ENCODE measurements at regions of chr16 and their contacts with region 1.

Region 1: GRCh38 chr16:7355758-7356157 is 23.1 kb downstream of the RBFOX1 start:
- DNase-seq: no peak
- H3K4me3 ChIP-seq: no peak overlapping the region
- H3K27ac ChIP-seq: no peak overlapping the region
- H3K4me1 ChIP-seq: no peaks in the 10 kb centered on the region
- H3K27me3 ChIP-seq: no peaks in the 10 kb centered on the region
- CTCF ChIP-seq: no peak

Region 2: DNA sequence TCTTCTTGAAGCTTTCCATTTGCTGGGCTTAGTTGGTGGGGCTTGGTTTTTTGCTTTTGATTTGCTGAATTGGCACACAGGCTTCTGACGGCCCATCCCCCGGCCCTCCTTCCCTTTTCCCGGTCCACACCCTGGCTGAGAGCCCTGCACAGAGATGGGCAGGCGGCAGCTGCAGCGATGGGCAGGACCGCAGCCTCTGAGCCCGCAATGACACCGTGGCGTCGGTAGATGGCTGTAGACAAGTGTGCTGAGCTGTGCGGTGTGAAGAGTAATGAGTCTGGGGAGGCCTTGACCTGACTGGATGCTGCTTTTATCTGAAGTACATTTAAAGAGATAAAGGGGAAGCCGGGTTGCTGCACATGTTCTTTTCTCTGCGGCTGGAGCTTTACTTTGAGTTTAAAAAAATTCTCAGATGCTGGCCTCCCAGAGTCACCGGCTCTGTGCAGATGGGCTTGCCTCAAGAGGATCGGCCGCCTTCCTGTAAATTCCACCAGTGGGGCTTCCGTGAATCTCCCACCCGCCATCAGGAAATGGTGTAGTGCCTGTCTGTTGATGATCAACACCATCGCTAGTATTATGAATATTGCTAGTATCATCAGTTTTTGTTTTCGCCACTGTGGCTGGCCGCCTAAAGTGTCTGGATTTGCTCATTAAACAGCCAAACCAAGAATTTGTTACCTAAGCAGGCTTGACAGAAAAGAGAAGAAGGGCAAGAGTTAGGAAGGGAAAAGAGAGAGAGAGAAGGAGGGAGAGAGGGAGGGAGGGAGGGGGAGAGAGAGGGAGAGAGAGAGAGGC is 268.7 kb before region 1 on chr16:
- CTCF ChIA-PET with region 1: no interaction called
- dilution Hi-C with region 1: no loop called
- in situ Hi-C with region 1: no loop called
- intact Hi-C with region 1: no loop called
- DNase-seq: no peak
- H3K4me3 ChIP-seq: no peak overlapping the region
- H3K27ac ChIP-seq: no peak overlapping the region
- H3K4me1 ChIP-seq: no peaks in the 10 kb centered on the region
- H3K27me3 ChIP-seq: no peaks in the 10 kb centered on the region
- CTCF ChIP-seq: no peak

Region 3: GRCh38 chr16:7313170-7313569 is 42.6 kb before region 1 on chr16:
- CTCF ChIA-PET with region 1: no interaction called
- dilution Hi-C with region 1: no loop called
- in situ Hi-C with region 1: no loop called
- intact Hi-C with region 1: no loop called
- DNase-seq: no peak
- H3K4me3 ChIP-seq: no peak overlapping the region
- H3K27ac ChIP-seq: no peak overlapping the region
- H3K4me1 ChIP-seq: no peaks in the 10 kb centered on the region
- H3K27me3 ChIP-seq: no peaks in the 10 kb centered on the region
- CTCF ChIP-seq: no peak

Region 4: DNA sequence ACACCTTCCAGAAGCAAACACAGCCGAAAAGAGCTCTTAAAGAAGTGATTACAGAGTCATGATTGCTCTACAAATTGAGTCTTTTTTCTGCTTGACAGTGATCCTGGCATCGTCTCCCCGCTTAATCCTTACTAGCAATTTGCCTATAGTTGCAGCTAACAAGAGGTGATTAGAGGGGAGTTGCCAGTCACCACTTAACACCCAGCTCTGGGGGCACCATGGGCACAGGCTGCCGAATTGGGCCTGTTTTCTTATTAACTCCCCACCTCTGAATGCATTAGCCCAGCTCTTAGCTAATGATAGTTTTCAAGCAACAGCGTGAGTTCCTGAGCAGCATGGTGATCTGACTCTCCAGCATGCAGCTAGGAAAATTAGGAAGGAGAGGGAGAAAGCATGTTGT is 70.4 kb after region 1 on chr16:
- CTCF ChIA-PET with region 1: no interaction called
- dilution Hi-C with region 1: no loop called
- in situ Hi-C with region 1: no loop called
- intact Hi-C with region 1: no loop called
- DNase-seq: no peak
- H3K4me3 ChIP-seq: no peak overlapping the region
- H3K27ac ChIP-seq: no peak overlapping the region
- H3K4me1 ChIP-seq: no peaks in the 10 kb centered on the region
- H3K27me3 ChIP-seq: no peaks in the 10 kb centered on the region
- CTCF ChIP-seq: no peak

Region 5: DNA sequence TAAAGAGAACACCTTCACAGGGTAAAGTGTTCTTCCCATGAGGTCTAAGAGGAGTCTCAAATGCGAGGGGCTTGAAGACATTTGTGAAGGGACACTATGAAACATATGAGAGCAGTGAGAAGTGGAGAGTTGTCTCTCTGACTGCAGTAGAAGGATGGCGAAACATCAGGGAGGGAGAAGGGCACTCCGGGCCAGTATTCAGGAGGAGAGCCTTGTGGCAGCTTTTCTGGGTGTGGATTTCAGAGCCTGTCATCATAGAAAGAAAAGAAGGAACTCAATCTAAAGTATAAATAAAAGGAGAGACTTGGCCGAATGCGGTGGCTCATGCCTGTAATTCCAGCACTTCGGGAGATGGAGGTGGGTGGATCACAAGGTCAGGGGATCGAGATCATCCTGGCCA is 94.0 kb after region 1 on chr16:
- CTCF ChIA-PET with region 1: no interaction called
- dilution Hi-C with region 1: loop called (anchors 5 kb)
- in situ Hi-C with region 1: no loop called
- intact Hi-C with region 1: no loop called
- DNase-seq: no peak
- H3K4me3 ChIP-seq: no peak overlapping the region
- H3K27ac ChIP-seq: no peak overlapping the region
- H3K4me1 ChIP-seq: no peaks in the 10 kb centered on the region
- H3K27me3 ChIP-seq: no peaks in the 10 kb centered on the region
- CTCF ChIP-seq: no peak

Measured in mammary epithelial cell (primary cell).